Endothelial cell of umbilical vein (primary cell): ENCODE measurements at regions of chr18 and their contacts with region 1.

Region 1: GRCh38 chr18:57803103-57803969 is at the start of gene ATP8B1:
- DNase-seq: peak; percentile 86
- H3K4me3 ChIP-seq: peak within 1 kb of the TSS; percentile 89 to 98 (median 94)
- H3K27ac ChIP-seq: peak within 1 kb of the TSS; percentile 63
- H3K4me1 ChIP-seq: peaks cover 43% of the 10 kb centered on the region
- H3K27me3 ChIP-seq: no peaks in the 10 kb centered on the region
- CTCF ChIP-seq: no peak
- POLR2A ChIP-seq: peak; percentile 79
- total RNA-seq, gene ATP8B1: 86.5 and 100 TPM in 2 replicates

Region 2: GRCh38 chr18:57326718-57327323 is 476.5 kb before region 1 on chr18:
- CTCF ChIA-PET with region 1: no interaction called
- POLR2A ChIA-PET with region 1: no interaction called
- dilution Hi-C with region 1: no loop called
- intact Hi-C with region 1: no loop called
- DNase-seq: no peak
- H3K4me3 ChIP-seq: no peak overlapping the region
- H3K27ac ChIP-seq: no peak overlapping the region
- H3K4me1 ChIP-seq: no peaks in the 10 kb centered on the region
- H3K27me3 ChIP-seq: no peaks in the 10 kb centered on the region
- CTCF ChIP-seq: no peak
- POLR2A ChIP-seq: no peak

Region 3: DNA sequence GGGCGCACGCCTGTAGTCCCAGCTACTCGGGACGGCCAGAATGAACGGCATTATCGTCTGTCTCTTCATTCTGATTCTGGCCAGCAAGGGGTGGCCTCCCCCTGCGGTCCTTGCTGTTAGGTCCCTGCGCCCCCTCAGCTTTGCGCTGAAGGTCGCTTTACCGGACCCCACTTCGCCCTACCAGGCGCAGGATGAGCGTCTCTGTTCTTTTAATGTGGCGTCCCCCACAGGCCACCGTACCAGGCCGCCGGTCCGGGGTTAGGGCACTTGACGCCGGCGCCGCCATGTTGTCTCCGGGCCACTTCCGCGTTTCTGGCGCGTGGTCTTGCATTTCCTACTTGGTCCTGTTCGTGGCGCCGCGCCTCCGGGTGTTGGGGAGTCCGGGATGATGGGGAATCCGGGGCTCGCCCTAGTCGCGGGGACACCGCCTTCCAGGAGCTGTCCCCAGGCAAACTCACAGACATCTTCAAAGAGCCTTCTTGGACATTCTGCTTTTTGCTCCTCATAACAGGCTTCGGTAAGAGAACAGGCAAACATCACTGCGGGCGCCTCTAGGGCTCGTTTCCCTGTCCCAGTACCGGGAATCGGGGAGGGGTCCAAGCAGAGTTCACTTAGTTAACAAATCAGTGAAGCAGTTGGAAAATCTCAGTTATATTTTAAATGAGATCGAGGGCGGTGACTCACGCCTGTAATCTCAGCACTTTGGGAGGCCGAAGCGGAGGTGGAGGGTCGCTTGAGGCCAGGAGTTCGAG is 173.2 kb before region 1 on chr18:
- CTCF ChIA-PET with region 1: interaction called, 3 read pairs
- POLR2A ChIA-PET with region 1: no interaction called
- dilution Hi-C with region 1: no loop called
- intact Hi-C with region 1: loop called (anchors 2 kb)
- DNase-seq: peak; percentile 94
- H3K4me3 ChIP-seq: peak overlapping the region; percentile 44 to 74 (median 55)
- H3K27ac ChIP-seq: peak overlapping the region; percentile 63
- H3K4me1 ChIP-seq: peaks cover 27% of the 10 kb centered on the region
- H3K27me3 ChIP-seq: no peaks in the 10 kb centered on the region
- CTCF ChIP-seq: peak; percentile 73 to 75
- POLR2A ChIP-seq: peak; percentile 37

Region 4: GRCh38 chr18:57677262-57678211 is 125.8 kb before region 1 on chr18:
- CTCF ChIA-PET with region 1: no interaction called
- POLR2A ChIA-PET with region 1: no interaction called
- dilution Hi-C with region 1: no loop called
- intact Hi-C with region 1: loop called (anchors 5 kb)
- DNase-seq: peak; percentile 88
- H3K4me3 ChIP-seq: no peak overlapping the region
- H3K27ac ChIP-seq: peak overlapping the region; percentile 70
- H3K4me1 ChIP-seq: peaks cover 36% of the 10 kb centered on the region
- H3K27me3 ChIP-seq: no peaks in the 10 kb centered on the region
- CTCF ChIP-seq: no peak
- POLR2A ChIP-seq: no peak

Region 5: GRCh38 chr18:57744211-57744694 is 59.1 kb before region 1 on chr18:
- CTCF ChIA-PET with region 1: no interaction called
- POLR2A ChIA-PET with region 1: no interaction called
- dilution Hi-C with region 1: no loop called
- intact Hi-C with region 1: loop called (anchors 1 kb)
- DNase-seq: peak; percentile 93
- H3K4me3 ChIP-seq: peak overlapping the region in 1 of 3 experiments; percentile 5
- H3K27ac ChIP-seq: peak overlapping the region; percentile 83
- H3K4me1 ChIP-seq: peaks cover 36% of the 10 kb centered on the region
- H3K27me3 ChIP-seq: no peaks in the 10 kb centered on the region
- CTCF ChIP-seq: no peak
- POLR2A ChIP-seq: no peak

Region 6: GRCh38 chr18:57819671-57820460 is 16.5 kb after region 1 on chr18:
- CTCF ChIA-PET with region 1: interaction called, 6 read pairs
- POLR2A ChIA-PET with region 1: interaction called, 3 read pairs
- dilution Hi-C with region 1: no loop called
- intact Hi-C with region 1: loop called (anchors 1 kb)
- DNase-seq: peak; percentile 99
- H3K4me3 ChIP-seq: no peak overlapping the region
- H3K27ac ChIP-seq: peak overlapping the region; percentile 96
- H3K4me1 ChIP-seq: peaks cover 18% of the 10 kb centered on the region
- H3K27me3 ChIP-seq: no peaks in the 10 kb centered on the region
- CTCF ChIP-seq: no peak
- POLR2A ChIP-seq: peak; percentile 43

Region 7: GRCh38 chr18:57837917-57838548 is 34.7 kb after region 1 on chr18:
- CTCF ChIA-PET with region 1: interaction called, 4 read pairs
- POLR2A ChIA-PET with region 1: no interaction called
- dilution Hi-C with region 1: no loop called
- intact Hi-C with region 1: loop called (anchors 1 kb)
- DNase-seq: peak; percentile 91
- H3K4me3 ChIP-seq: no peak overlapping the region
- H3K27ac ChIP-seq: peak overlapping the region; percentile 74
- H3K4me1 ChIP-seq: peaks cover 33% of the 10 kb centered on the region
- H3K27me3 ChIP-seq: no peaks in the 10 kb centered on the region
- CTCF ChIP-seq: no peak
- POLR2A ChIP-seq: no peak

Region 8: DNA sequence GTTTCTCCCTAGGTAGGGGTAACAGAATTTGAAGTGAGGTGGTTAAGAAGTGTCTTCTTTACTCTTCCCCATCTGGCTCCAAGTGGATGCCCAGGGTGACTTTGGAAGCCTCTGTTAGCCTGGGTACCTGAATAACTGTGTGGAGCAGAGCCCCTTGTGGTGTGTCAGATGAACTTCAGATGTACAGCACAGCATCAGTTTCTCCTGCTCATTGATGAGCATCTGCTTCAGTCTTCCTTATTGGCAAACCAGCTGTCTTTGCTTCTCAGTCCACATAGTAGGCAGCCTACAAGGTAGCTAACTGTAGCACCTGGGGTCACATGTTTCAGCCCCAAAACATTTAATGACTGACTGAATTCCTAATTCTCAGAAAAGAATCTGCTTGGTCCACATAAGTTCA is 56.0 kb after region 1 on chr18:
- CTCF ChIA-PET with region 1: interaction called, 5 read pairs
- POLR2A ChIA-PET with region 1: no interaction called
- dilution Hi-C with region 1: no loop called
- intact Hi-C with region 1: loop called (anchors 2 kb)
- DNase-seq: peak; percentile 35
- H3K4me3 ChIP-seq: no peak overlapping the region
- H3K27ac ChIP-seq: no peak overlapping the region
- H3K4me1 ChIP-seq: no peaks in the 10 kb centered on the region
- H3K27me3 ChIP-seq: no peaks in the 10 kb centered on the region
- CTCF ChIP-seq: peak; percentile 49 to 50
- POLR2A ChIP-seq: no peak

Region 9: DNA sequence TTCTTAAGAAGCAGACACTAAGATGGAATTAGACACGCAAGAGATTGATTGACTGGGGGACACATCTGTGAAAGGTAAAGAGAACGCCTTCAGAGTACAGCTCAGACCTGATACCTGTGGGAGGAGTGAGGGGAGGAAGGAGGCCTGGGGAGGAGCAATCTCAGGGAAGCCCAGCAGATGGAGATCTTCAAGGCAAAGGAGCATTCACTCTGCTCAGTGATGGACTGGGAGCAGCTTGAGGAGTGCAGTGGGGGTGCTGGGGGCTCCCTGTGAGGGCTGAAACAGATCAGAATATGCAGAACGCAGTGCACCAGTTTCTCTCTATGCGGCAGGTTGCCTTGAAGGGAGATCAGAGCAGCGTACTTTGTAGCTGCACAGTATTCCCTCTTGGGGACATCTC is 103.5 kb after region 1 on chr18:
- CTCF ChIA-PET with region 1: no interaction called
- POLR2A ChIA-PET with region 1: no interaction called
- dilution Hi-C with region 1: no loop called
- intact Hi-C with region 1: no loop called
- DNase-seq: no peak
- H3K4me3 ChIP-seq: no peak overlapping the region
- H3K27ac ChIP-seq: no peak overlapping the region
- H3K4me1 ChIP-seq: peaks cover 4% of the 10 kb centered on the region
- H3K27me3 ChIP-seq: no peaks in the 10 kb centered on the region
- CTCF ChIP-seq: peak in 1 of 2 donors; percentile 3
- POLR2A ChIP-seq: no peak